Naive thymus-derived CD8-positive, alpha-beta T cell (primary cell): ENCODE measurements at regions of chr19 and their contacts with region 1.

Region 1: DNA sequence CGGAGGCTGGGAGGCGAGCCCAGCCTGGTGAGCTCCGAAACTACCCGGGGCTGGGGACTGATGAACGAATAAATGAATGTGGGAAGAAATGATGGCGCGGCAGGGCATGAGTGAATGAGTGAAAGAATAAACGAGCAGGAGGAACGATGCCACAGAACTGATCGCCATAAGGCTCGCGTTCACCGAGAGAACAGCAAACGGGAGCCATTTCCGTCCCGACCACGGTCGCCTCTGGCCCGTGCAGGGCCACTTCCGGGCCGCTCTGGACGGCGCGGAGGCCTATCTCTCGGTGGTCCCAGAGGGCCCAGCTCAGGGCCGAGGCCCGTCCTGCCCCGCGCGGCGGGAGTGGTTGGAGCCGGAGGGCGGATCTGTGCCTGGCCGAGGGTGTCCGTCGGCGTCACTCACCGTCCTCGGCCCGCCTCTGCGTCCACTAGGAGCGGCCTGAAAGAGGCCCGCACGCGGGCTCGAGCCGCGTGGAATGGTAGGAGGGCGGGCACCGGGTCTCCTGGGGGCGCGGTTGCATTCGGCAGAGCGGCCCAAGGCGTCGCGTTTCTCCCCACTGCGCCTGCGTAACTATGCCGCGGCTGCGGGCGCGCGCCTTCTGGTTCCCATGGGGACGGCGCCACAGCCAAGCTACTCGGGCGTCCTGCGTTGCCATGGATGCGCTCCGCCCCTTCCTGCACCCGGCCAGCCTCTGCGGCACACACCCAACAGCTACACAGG is at the start of gene ZNF497:
- DNase-seq: peak; percentile 94 to 98 (median 96)
- ATAC-seq: peak; percentile 86 to 88
- H3K4me3 Mint-ChIP-seq: peak within 1 kb of the TSS; percentile 83 to 97 (median 93)
- H3K27ac Mint-ChIP-seq: peak within 1 kb of the TSS; percentile 85 to 97 (median 94)
- H3K4me1 Mint-ChIP-seq: peaks cover 10 to 18% (median 16%) of the 10 kb centered on the region in 4 donors
- H3K27me3 Mint-ChIP-seq: no peaks in the 10 kb centered on the region
- polyA plus RNA-seq, gene ZNF497: 1.8 to 2.2 (median 1.9) TPM

Region 2: GRCh38 chr19:58278157-58279041 is 84.0 kb before region 1 on chr19 and contains the start of gene ZNF8:
- POLR2A ChIA-PET with region 1: interaction called, 12 read pairs
- DNase-seq: peak; percentile 90 to 98 (median 94)
- ATAC-seq: peak; percentile 97
- H3K4me3 Mint-ChIP-seq: peak within 1 kb of the TSS; percentile 89 to 99 (median 96)
- H3K27ac Mint-ChIP-seq: peak within 1 kb of the TSS; percentile 91 to 99 (median 96)
- H3K4me1 Mint-ChIP-seq: peaks cover 24 to 58% (median 49%) of the 10 kb centered on the region in 4 donors
- H3K27me3 Mint-ChIP-seq: no peaks in the 10 kb centered on the region
- polyA plus RNA-seq, gene ZNF8: 0.44 to 1.1 (median 0.75) TPM

Region 3: GRCh38 chr19:58326914-58327726 is 35.3 kb before region 1 on chr19 and contains the start of gene ZSCAN22:
- POLR2A ChIA-PET with region 1: interaction called, 16 read pairs
- DNase-seq: peak; percentile 76 to 93 (median 82)
- ATAC-seq: peak; percentile 92 to 94
- H3K4me3 Mint-ChIP-seq: no peak within 1 kb of the TSS
- H3K27ac Mint-ChIP-seq: no peak within 1 kb of the TSS
- H3K4me1 Mint-ChIP-seq: peaks cover 0 to 14% (median 6%) of the 10 kb centered on the region in 4 donors
- H3K27me3 Mint-ChIP-seq: no peaks in the 10 kb centered on the region
- polyA plus RNA-seq, gene ZSCAN22: 0.69 to 3.3 (median 1.4) TPM

Region 4: DNA sequence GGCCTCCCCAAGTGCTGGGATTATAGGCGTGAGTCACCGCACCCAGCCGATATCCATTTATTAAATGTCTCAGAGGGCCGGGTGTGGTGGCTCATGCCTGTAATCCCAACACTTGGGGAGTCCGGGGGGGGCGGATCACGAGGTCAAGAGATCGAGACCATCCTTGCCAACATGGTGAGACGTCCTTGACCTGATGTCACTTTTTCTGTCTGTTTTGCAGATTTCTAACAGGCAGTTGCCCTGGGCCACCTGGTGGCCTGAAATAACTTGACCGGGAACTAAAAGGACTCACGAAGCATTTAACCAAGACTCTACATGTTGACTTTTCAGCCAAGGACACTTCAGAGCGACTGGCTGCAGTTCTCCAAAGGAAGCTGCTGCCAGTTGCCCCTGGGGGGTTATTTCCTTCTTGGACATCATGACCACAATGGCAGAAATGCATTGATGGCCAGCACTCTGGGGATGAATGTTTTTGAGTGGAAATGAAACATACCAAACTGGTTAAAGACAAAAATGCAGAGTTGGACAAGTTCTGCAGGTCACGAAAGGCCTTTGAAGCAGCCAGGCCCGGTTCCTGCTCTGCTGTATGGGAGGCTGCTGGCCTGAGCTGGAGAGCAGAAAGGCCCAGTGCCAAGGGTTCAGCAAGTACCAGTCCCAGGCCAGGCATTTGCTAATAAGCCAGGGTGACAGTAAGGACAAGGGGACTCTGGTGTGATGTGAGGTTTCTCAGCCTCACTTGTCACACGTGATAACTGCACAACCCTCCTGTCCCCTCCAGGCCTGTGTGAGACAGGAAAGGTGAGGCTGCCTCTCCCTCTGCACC is 10.1 kb after region 1 on chr19:
- POLR2A ChIA-PET with region 1: interaction called, 15 read pairs
- DNase-seq: no peak
- ATAC-seq: no peak
- H3K4me3 Mint-ChIP-seq: no peak overlapping the region
- H3K27ac Mint-ChIP-seq: no peak overlapping the region
- H3K4me1 Mint-ChIP-seq: peaks cover 0 to 2% (median under 1%) of the 10 kb centered on the region in 4 donors
- H3K27me3 Mint-ChIP-seq: no peaks in the 10 kb centered on the region

Region 5: GRCh38 chr19:58386576-58387337 is 24.3 kb after region 1 on chr19 and contains the start of gene RPS5:
- POLR2A ChIA-PET with region 1: interaction called, 43 read pairs
- DNase-seq: peak; percentile 87 to 99 (median 96)
- ATAC-seq: peak; percentile 89 to 90
- H3K4me3 Mint-ChIP-seq: peak within 1 kb of the TSS; percentile 92 to 99 (median 95)
- H3K27ac Mint-ChIP-seq: peak within 1 kb of the TSS; percentile 97 to 100 (median 98)
- H3K4me1 Mint-ChIP-seq: peaks cover 14 to 58% (median 54%) of the 10 kb centered on the region in 4 donors
- H3K27me3 Mint-ChIP-seq: peaks cover 0 to 2% (median 0%) of the 10 kb centered on the region in 5 donors
- polyA plus RNA-seq, gene RPS5: 1,899 to 2,106 (median 2,080) TPM

Region 6: GRCh38 chr19:58416604-58417003 is 54.2 kb after region 1 on chr19:
- POLR2A ChIA-PET with region 1: no interaction called
- DNase-seq: no peak
- ATAC-seq: no peak
- H3K4me3 Mint-ChIP-seq: no peak overlapping the region
- H3K27ac Mint-ChIP-seq: no peak overlapping the region
- H3K4me1 Mint-ChIP-seq: peaks cover 0 to 6% (median 2%) of the 10 kb centered on the region in 4 donors
- H3K27me3 Mint-ChIP-seq: no peaks in the 10 kb centered on the region

Region 7: DNA sequence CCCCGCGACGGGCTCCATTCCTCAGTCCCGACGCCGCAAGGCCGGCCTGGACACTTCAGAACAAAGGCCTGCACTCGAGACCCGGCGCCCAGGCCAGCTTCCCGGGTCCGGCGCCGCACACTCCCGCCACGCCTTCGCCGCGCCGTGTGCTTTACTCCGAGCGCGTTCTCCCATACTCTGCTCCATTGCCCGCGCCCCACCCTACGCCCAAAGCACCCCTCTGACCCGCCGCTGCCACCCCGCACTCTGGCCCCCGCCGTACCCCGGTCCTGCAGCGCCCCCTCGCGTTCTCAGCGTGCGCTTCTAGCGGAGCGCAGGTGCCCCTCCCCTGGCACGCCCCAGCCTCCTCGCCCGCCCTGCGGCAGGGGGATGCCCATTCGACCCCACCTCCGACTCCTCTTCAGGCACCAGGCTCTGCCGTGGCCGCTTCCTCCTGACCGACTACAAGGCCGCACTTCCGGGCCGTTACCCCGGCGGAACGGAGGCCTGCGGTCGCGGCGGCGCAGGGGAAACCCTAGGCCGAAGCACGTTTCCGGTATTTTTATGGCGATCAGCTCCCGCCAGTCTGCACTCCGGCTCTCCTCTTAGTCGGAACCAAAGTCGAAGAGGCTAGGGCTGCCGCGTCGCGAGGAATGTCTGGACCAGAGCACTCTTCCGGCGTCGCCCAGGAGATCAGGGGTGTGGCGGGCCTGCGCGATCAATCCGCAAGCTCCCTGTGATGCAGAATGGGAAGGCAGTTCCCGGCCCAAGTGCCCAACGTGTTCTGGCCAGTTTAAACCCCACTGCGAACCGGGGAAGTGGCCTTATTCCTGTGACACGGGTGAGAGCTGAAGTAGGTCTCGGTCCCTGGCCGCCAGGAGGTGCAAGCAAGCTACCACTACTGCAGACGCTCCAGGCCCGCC is 157.2 kb after region 1 on chr19 and contains the start of gene ZBTB45:
- POLR2A ChIA-PET with region 1: interaction called, 11 read pairs
- DNase-seq: peak; percentile 81 to 92 (median 89)
- ATAC-seq: peak; percentile 82
- H3K4me3 Mint-ChIP-seq: peak within 1 kb of the TSS; percentile 92 to 98 (median 96)
- H3K27ac Mint-ChIP-seq: peak within 1 kb of the TSS; percentile 95 to 98 (median 98)
- H3K4me1 Mint-ChIP-seq: peaks cover 28 to 45% (median 42%) of the 10 kb centered on the region in 4 donors
- H3K27me3 Mint-ChIP-seq: no peaks in the 10 kb centered on the region
- polyA plus RNA-seq, gene ZBTB45: 2.8 to 5.3 (median 3.5) TPM